AG04450 (cell line): ENCODE measurements at regions of chr17 and their contacts with region 1.

Region 1: GRCh38 chr17:40038882-40039513 is 15.2 kb downstream of the MED24 start:
- DNase-seq: peak; percentile 66
- H3K4me3 ChIP-seq: no peak overlapping the region; the same call in 1 of the 2 replicates
- H3K27ac ChIP-seq: peak overlapping the region; percentile 52
- H3K27me3 ChIP-seq: no peaks in the 10 kb centered on the region
- CTCF ChIP-seq: peak; percentile 87

Region 2: GRCh38 chr17:40021451-40021971 is 17.5 kb before region 1 on chr17:
- CTCF ChIA-PET with region 1: interaction called, 46 read pairs
- POLR2A ChIA-PET with region 1: interaction called, 4 read pairs
- DNase-seq: no peak
- H3K4me3 ChIP-seq: no peak overlapping the region
- H3K27ac ChIP-seq: peak overlapping the region; percentile 75
- H3K27me3 ChIP-seq: no peaks in the 10 kb centered on the region
- CTCF ChIP-seq: no peak

Region 3: GRCh38 chr17:40026816-40027613 is 12.0 kb before region 1 on chr17:
- CTCF ChIA-PET with region 1: interaction called, 46 read pairs
- POLR2A ChIA-PET with region 1: interaction called, 3 read pairs
- DNase-seq: peak; percentile 62
- H3K4me3 ChIP-seq: no peak overlapping the region
- H3K27ac ChIP-seq: peak overlapping the region; percentile 21
- H3K27me3 ChIP-seq: no peaks in the 10 kb centered on the region
- CTCF ChIP-seq: peak; percentile 90

Region 4: GRCh38 chr17:40062329-40063186 is 23.6 kb after region 1 on chr17 and contains the start of gene THRA:
- CTCF ChIA-PET with region 1: interaction called, 13 read pairs
- POLR2A ChIA-PET with region 1: no interaction called
- DNase-seq: no peak
- H3K4me3 ChIP-seq: peak within 1 kb of the TSS; percentile 90
- H3K27ac ChIP-seq: no peak within 1 kb of the TSS
- H3K27me3 ChIP-seq: peaks cover 3% of the 10 kb centered on the region
- CTCF ChIP-seq: 0 out of 2 replicates have a peak, but pooled peaks have one; percentile 15
- polyA plus RNA-seq, gene THRA: 25.2 and 32.0 TPM in 2 replicates

Region 5: GRCh38 chr17:40086150-40087044 is 47.4 kb after region 1 on chr17:
- CTCF ChIA-PET with region 1: interaction called, 10 read pairs
- POLR2A ChIA-PET with region 1: interaction called, 3 read pairs
- DNase-seq: no peak
- H3K4me3 ChIP-seq: no peak overlapping the region
- H3K27ac ChIP-seq: no peak overlapping the region
- H3K27me3 ChIP-seq: no peaks in the 10 kb centered on the region
- CTCF ChIP-seq: peak; percentile 81